Activated CD8-positive, alpha-beta T cell treated with anti-CD3 and anti-CD28 coated beads for 36 hours (primary cell): ENCODE measurements at regions of chr14 and their contacts with region 1.

Region 1: DNA sequence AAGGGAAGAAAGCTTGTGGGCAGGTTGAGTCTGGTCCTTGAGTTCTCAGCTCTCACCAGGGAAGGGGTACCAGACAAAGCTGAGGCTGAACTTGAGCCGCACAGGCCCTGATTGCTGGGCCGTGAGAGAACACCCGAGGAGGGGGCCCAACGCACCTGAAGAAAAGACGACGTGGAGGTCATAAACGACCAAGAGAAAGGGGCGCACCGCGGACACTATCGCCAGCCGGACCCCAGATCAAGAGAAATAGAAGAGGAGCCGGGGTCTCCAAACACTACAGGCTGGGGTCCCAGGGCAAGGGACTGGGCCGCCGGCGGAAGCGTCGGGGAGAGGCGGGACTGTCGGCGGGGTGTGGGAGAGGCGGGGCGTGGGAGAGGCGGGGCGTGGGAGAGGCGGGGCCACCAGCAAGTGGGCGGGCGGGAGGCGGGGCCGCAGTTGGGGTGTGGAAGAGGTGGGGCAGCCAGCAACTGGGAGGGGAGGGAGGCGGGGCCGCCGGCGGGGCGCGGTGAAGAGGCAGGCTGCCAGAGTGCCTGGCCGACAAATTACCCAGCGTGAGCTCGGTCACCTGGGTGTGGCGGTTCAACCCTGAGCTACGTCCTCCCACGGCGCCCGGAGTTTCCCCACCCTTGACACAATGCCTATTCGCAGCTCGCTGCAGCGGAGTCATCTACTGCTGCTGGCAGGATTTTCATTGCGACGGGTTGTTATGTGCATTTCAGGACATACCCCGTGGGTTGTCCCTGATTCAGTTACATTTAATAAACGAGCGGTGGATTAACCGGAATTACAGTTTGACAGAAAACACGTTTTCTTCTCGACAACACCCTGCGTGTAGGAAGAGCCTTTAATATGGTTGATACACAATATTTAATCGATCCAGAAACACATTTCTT is 15.5 kb upstream of the NEMF start:
- DNase-seq: peak; percentile 100
- ATAC-seq: peak; percentile 86
- H3K4me3 Mint-ChIP-seq: peak overlapping the region; percentile 97
- H3K27ac Mint-ChIP-seq: peak overlapping the region; percentile 98
- H3K4me1 Mint-ChIP-seq: peaks cover 28% of the 10 kb centered on the region
- H3K27me3 Mint-ChIP-seq: no peaks in the 10 kb centered on the region
- CTCF ChIP-seq: no peak

Region 2: DNA sequence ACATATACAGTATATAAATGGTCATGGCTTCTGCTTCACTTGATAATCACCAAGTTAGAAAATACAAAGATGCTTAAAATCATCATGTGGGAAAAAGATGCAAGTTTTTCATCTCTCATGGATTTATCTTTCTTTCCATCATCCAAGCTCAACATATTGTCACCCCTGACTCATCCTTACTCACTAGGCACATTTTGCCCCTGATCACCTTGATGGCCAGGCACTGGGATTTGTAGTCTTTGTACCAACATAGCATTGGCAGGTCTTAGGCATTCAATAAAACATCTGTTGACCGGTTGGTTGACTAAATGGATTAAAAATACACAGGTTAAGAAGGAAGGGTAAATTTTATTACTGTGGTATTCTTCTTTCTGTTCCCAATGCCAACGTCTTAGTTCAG is 72.1 kb before region 1 on chr14:
- CTCF ChIA-PET with region 1: no interaction called
- POLR2A ChIA-PET with region 1: no interaction called
- intact Hi-C with region 1: no loop called
- DNase-seq: no peak
- ATAC-seq: no peak
- H3K4me3 Mint-ChIP-seq: no peak overlapping the region
- H3K27ac Mint-ChIP-seq: peak overlapping the region; percentile 66
- H3K4me1 Mint-ChIP-seq: no peaks in the 10 kb centered on the region
- H3K27me3 Mint-ChIP-seq: no peaks in the 10 kb centered on the region
- CTCF ChIP-seq: no peak

Region 3: GRCh38 chr14:49852301-49853157 is 15.5 kb before region 1 on chr14 and contains the start of gene NEMF:
- CTCF ChIA-PET with region 1: interaction called, 139 read pairs
- POLR2A ChIA-PET with region 1: interaction called, 65 read pairs
- intact Hi-C with region 1: no loop called
- DNase-seq: peak; percentile 91
- ATAC-seq: peak; percentile 87
- H3K4me3 Mint-ChIP-seq: peak within 1 kb of the TSS; percentile 97
- H3K27ac Mint-ChIP-seq: peak within 1 kb of the TSS; percentile 97
- H3K4me1 Mint-ChIP-seq: peaks cover 32% of the 10 kb centered on the region
- H3K27me3 Mint-ChIP-seq: no peaks in the 10 kb centered on the region
- CTCF ChIP-seq: peak; percentile 92
- total RNA-seq, gene NEMF: 62.3 to 63.8 TPM

Region 4: DNA sequence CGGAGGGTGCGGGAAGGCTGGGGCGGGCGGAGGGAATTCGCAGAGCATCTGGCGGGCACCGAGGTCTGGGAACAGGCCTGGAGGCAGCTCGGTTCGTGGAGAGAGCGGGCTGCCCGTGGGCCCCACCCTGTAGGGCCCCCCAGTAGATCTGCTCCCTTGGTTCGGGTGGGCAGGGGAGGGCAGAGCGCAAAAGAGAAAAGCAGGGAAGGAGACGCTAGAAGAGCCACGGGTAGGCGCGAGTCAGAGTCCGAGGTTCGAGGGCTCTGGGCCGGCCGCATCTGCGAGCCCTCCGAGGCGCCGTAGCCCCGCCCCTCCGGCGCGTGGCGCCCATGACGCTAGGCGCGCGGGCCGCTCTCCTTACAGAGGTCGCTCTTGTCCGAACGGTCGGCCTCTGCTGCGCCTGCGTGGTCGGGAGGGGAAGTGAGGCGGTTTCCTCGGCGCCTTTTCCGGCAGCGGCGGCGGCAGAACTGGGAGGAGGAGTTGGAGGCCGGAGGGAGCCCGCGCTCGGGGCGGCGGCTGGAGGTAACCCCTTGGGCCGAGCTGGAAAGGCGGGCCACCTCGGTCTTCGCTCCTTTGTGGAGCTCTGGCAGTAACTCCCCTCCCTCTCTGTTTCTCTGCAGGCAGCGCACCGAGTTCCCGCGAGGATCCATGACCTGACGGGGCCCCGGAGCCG is 24.7 kb after region 1 on chr14 and contains the start of gene ARF6:
- CTCF ChIA-PET with region 1: interaction called, 14 read pairs
- POLR2A ChIA-PET with region 1: interaction called, 56 read pairs
- intact Hi-C with region 1: loop called (anchors 1 kb)
- DNase-seq: peak; percentile 98
- ATAC-seq: peak; percentile 80
- H3K4me3 Mint-ChIP-seq: peak within 1 kb of the TSS; percentile 88
- H3K27ac Mint-ChIP-seq: peak within 1 kb of the TSS; percentile 97
- H3K4me1 Mint-ChIP-seq: peaks cover 4% of the 10 kb centered on the region
- H3K27me3 Mint-ChIP-seq: no peaks in the 10 kb centered on the region
- CTCF ChIP-seq: no peak
- total RNA-seq, gene ARF6: 170 TPM

Region 5: GRCh38 chr14:50109342-50109741 is 241.3 kb after region 1 on chr14:
- CTCF ChIA-PET with region 1: interaction called, 218 read pairs
- POLR2A ChIA-PET with region 1: interaction called, 23 read pairs
- intact Hi-C with region 1: loop called (anchors 2 kb)
- DNase-seq: no peak
- ATAC-seq: no peak
- H3K4me3 Mint-ChIP-seq: no peak overlapping the region
- H3K27ac Mint-ChIP-seq: no peak overlapping the region
- H3K4me1 Mint-ChIP-seq: peaks cover 37% of the 10 kb centered on the region
- H3K27me3 Mint-ChIP-seq: no peaks in the 10 kb centered on the region
- CTCF ChIP-seq: no peak

Region 6: GRCh38 chr14:50520947-50521815 is 653.1 kb after region 1 on chr14:
- CTCF ChIA-PET with region 1: no interaction called
- POLR2A ChIA-PET with region 1: no interaction called
- intact Hi-C with region 1: loop called (anchors 10 kb)
- DNase-seq: peak; percentile 87
- ATAC-seq: peak; percentile 78
- H3K4me3 Mint-ChIP-seq: peak overlapping the region; percentile 64
- H3K27ac Mint-ChIP-seq: peak overlapping the region; percentile 92
- H3K4me1 Mint-ChIP-seq: peaks cover 50% of the 10 kb centered on the region
- H3K27me3 Mint-ChIP-seq: no peaks in the 10 kb centered on the region
- CTCF ChIP-seq: no peak